ENCODE measurements at regions of chr2 and their contacts with region 1.

Region 1: GRCh38 chr2:28751252-28751955 is at the start of gene PPP1CB:
- DNase-seq: peak; percentile 82
- H3K4me3 ChIP-seq: peak within 1 kb of the TSS; percentile 99
- H3K27me3 ChIP-seq: no peaks in the 10 kb centered on the region
- CTCF ChIP-seq: peak; percentile 27; the same call in 1 of the 2 replicates
- polyA plus RNA-seq, gene PPP1CB: 45.2 and 75.4 TPM in 2 replicates

Region 2: DNA sequence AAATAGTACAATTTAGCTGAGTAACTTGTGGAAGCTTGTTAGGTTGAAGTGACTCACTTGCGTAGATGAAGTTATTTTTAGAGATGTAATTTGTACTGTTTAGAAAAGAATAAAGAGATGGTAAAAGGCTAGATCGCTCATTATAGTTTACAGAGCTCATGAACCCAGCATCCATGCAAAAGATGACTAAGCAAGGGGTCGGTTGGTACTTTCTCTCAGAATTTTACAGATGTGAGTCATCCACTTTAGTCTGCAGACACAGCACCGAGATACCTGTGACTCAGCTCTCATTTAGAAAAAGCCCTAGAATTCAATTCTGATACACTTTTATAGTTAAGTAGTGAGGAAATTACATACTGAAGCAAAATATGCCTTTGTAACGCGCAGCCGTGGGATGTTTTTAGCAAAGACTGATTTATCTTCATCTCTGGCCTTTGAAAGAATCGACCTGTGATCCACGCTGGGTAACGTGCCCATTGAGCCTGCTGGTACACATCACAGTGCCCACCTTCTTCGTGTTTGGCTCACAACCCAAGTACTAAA is 475.3 kb before region 1 on chr2:
- CTCF ChIA-PET with region 1: no interaction called
- POLR2A ChIA-PET with region 1: interaction called, 19 read pairs
- DNase-seq: peak; percentile 99
- H3K4me3 ChIP-seq: no peak overlapping the region
- H3K27me3 ChIP-seq: no peaks in the 10 kb centered on the region
- CTCF ChIP-seq: no peak

Region 3: DNA sequence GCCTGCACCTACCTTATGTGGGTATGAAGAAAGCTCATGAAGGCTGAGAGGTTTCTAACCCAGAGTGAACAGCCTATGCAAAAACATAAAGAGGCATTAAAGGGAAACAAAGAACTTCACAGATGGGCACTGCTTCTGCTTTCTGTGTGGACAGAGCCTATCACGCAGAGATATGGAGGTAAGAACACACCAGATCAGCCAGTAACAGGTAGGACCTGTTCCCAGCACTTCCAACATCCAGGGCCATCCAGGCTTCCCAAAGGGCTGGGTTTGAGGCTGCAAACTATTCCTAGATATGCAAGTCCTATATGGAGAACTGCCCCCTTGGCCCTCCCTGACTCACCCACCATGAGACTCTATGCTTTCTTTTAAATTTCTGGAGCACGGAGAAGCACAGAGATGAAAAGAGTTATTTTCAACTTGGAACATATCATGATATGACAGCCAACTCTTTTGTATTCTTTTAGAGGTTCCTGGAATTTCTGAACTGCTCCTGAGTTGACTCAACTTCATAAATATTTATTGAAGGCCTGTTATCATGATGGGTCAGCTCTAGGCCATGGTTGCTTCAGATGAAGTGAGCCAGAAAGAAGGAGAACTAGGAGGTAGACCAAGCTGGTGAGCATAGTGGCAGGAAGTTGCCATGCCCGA is 77.2 kb before region 1 on chr2:
- CTCF ChIA-PET with region 1: no interaction called
- POLR2A ChIA-PET with region 1: no interaction called
- DNase-seq: no peak
- H3K4me3 ChIP-seq: no peak overlapping the region
- H3K27me3 ChIP-seq: no peaks in the 10 kb centered on the region
- CTCF ChIP-seq: no peak

Region 4: GRCh38 chr2:28768952-28769351 is 17.5 kb after region 1 on chr2:
- CTCF ChIA-PET with region 1: no interaction called
- POLR2A ChIA-PET with region 1: no interaction called
- DNase-seq: no peak
- H3K4me3 ChIP-seq: no peak overlapping the region
- H3K27me3 ChIP-seq: no peaks in the 10 kb centered on the region
- CTCF ChIP-seq: no peak

Region 5: GRCh38 chr2:29033172-29033571 is 281.8 kb after region 1 on chr2:
- CTCF ChIA-PET with region 1: no interaction called
- POLR2A ChIA-PET with region 1: no interaction called
- DNase-seq: no peak
- H3K4me3 ChIP-seq: no peak overlapping the region
- H3K27me3 ChIP-seq: peaks cover 1% of the 10 kb centered on the region
- CTCF ChIP-seq: no peak

Measured in BJ (cell line).